ENCODE measurements at regions of chr16 and their contacts with region 1.

Region 1: DNA sequence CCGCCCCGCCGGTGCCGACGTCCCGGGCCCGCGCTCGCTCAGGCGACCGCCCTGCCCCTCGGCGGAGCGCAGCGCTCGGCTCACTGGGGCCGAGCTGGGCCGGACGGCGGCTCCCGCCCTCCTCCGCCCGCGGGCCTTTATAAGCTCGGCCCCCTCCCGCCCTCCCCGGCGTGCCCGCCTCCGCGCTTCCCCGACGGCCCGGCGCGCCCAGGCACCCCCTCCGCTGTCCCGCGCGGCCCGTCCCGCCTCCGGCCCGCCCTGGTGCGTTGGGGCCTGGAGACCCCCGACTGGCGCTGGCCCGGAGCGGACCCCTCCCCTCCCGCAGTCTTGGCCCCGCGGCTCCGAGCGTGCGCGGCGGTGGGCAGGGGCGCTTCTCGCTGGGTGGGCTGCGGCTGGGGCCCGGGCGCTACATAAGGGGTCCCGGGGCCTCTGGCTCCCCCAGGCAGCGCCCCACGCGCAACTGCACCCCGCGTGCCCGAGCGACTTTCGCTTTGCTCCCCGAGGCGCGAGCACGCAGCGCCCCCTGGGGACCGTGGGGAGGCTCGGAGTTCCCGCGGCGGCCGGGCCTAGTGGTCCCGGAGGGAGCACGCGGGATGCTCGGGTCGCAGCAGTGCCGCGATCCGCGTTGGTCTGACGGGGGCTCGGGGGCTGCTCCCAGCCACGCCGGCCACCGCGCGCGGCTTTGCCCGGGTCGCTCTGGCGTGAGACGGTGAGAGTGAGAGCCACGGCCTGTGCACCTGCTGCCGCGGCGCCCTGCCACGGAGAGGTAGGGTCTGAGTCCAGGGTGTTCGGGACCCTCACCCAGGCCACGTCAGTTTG is at the start of gene PIEZO1:
- DNase-seq: peak; percentile 70 to 86
- H3K4me3 ChIP-seq: peak within 1 kb of the TSS; percentile 93
- H3K4me3 Mint-ChIP-seq: peak within 1 kb of the TSS; percentile 69
- H3K27ac Mint-ChIP-seq: peak within 1 kb of the TSS; percentile 82
- H3K4me1 ChIP-seq: peaks cover 41% of the 10 kb centered on the region
- H3K4me1 Mint-ChIP-seq: peaks cover 24% of the 10 kb centered on the region
- H3K27me3 ChIP-seq: no peaks in the 10 kb centered on the region
- H3K27me3 Mint-ChIP-seq: no peaks in the 10 kb centered on the region
- CTCF ChIP-seq: peak; percentile 93 to 96
- total RNA-seq, gene PIEZO1: 248 and 284 TPM in 2 replicates

Region 2: GRCh38 chr16:88743693-88744576 is 41.4 kb before region 1 on chr16:
- CTCF ChIA-PET with region 1: interaction called, 6 read pairs
- POLR2A ChIA-PET with region 1: no interaction called
- intact Hi-C with region 1: loop called (anchors 1 kb)
- DNase-seq: peak; percentile 82 to 90
- H3K4me3 ChIP-seq: no peak overlapping the region
- H3K4me3 Mint-ChIP-seq: no peak overlapping the region
- H3K27ac Mint-ChIP-seq: peak overlapping the region; percentile 25
- H3K4me1 ChIP-seq: peaks cover 4% of the 10 kb centered on the region; the same call in 1 of the 2 replicates
- H3K4me1 Mint-ChIP-seq: no peaks in the 10 kb centered on the region
- H3K27me3 ChIP-seq: no peaks in the 10 kb centered on the region
- H3K27me3 Mint-ChIP-seq: no peaks in the 10 kb centered on the region
- CTCF ChIP-seq: peak; percentile 95 to 98

Region 3: GRCh38 chr16:88763502-88764053 is 21.7 kb before region 1 on chr16:
- CTCF ChIA-PET with region 1: interaction called, 45 read pairs
- POLR2A ChIA-PET with region 1: interaction called, 11 read pairs
- intact Hi-C with region 1: loop called (anchors 1 kb)
- DNase-seq: peak; percentile 95 to 96
- H3K4me3 ChIP-seq: no peak overlapping the region
- H3K4me3 Mint-ChIP-seq: peak overlapping the region; percentile 68
- H3K27ac Mint-ChIP-seq: peak overlapping the region; percentile 90
- H3K4me1 ChIP-seq: peaks cover 65% of the 10 kb centered on the region
- H3K4me1 Mint-ChIP-seq: peaks cover 19% of the 10 kb centered on the region
- H3K27me3 ChIP-seq: no peaks in the 10 kb centered on the region
- H3K27me3 Mint-ChIP-seq: no peaks in the 10 kb centered on the region
- CTCF ChIP-seq: peak; percentile 4 to 41

Measured in Caco-2 (cell line).